ENCODE measurements at regions of chr2 and their contacts with region 1.

Region 1: GRCh38 chr2:64052468-64053241 is 33.4 kb upstream of the VPS54 start:
- DNase-seq: no peak
- H3K4me3 ChIP-seq: no peak overlapping the region
- H3K27ac ChIP-seq: no peak overlapping the region
- H3K4me1 ChIP-seq: no peaks in the 10 kb centered on the region
- H3K27me3 ChIP-seq: no peaks in the 10 kb centered on the region
- CTCF ChIP-seq: no peak
- EP300 ChIP-seq: no peak
- POLR2A ChIP-seq: no peak

Region 2: GRCh38 chr2:64311948-64312621 is 259.4 kb after region 1 on chr2:
- intact Hi-C with region 1: loop called in 1 of 4 experiments (anchors 10 kb)
- DNase-seq: peak in 4 of 5 donors; percentile 39 to 65 (median 53)
- H3K4me3 ChIP-seq: no peak overlapping the region
- H3K27ac ChIP-seq: no peak overlapping the region
- H3K4me1 ChIP-seq: no peaks in the 10 kb centered on the region
- H3K27me3 ChIP-seq: no peaks in the 10 kb centered on the region
- CTCF ChIP-seq: peak in 1 of 3 donors; percentile 50
- EP300 ChIP-seq: no peak
- POLR2A ChIP-seq: no peak

Region 3: GRCh38 chr2:64488050-64488974 is 435.7 kb after region 1 on chr2:
- intact Hi-C with region 1: loop called in 2 of 4 experiments (anchors 10 kb)
- DNase-seq: peak; percentile 38 to 77 (median 73)
- H3K4me3 ChIP-seq: no peak overlapping the region
- H3K27ac ChIP-seq: no peak overlapping the region
- H3K4me1 ChIP-seq: no peaks in the 10 kb centered on the region
- H3K27me3 ChIP-seq: no peaks in the 10 kb centered on the region
- CTCF ChIP-seq: peak; percentile 65 to 75 (median 75)
- EP300 ChIP-seq: no peak
- POLR2A ChIP-seq: no peak